ENCODE measurements at regions of chr22 and their contacts with region 1.

Region 1: GRCh38 chr22:36470162-36470993 is 11.1 kb downstream of the TXN2 start:
- DNase-seq: peak; percentile 85 to 87 (median 87)
- H3K4me3 ChIP-seq: no peak overlapping the region
- H3K4me3 Mint-ChIP-seq: no peak overlapping the region
- H3K27ac ChIP-seq: no peak overlapping the region
- H3K27ac Mint-ChIP-seq: peak overlapping the region; percentile 30 to 92 (median 79)
- H3K4me1 ChIP-seq: peaks cover 18% of the 10 kb centered on the region
- H3K4me1 Mint-ChIP-seq: peaks cover 11 to 28% (median 15%) of the 10 kb centered on the region in 4 donors
- H3K27me3 ChIP-seq: no peaks in the 10 kb centered on the region
- H3K27me3 Mint-ChIP-seq: no peaks in the 10 kb centered on the region

Region 2: GRCh38 chr22:36286471-36287224 is 183.7 kb before region 1 on chr22:
- CTCF ChIA-PET with region 1: interaction called, 12 read pairs
- POLR2A ChIA-PET with region 1: no interaction called
- intact Hi-C with region 1: no loop called
- DNase-seq: peak in 4 of 5 donors; percentile 56 to 68 (median 60)
- H3K4me3 ChIP-seq: no peak overlapping the region
- H3K4me3 Mint-ChIP-seq: peak overlapping the region in 6 of 8 donors; percentile 29 to 73 (median 56)
- H3K27ac ChIP-seq: peak overlapping the region; percentile 10
- H3K27ac Mint-ChIP-seq: peak overlapping the region; percentile 83 to 94 (median 89)
- H3K4me1 ChIP-seq: peaks cover 43% of the 10 kb centered on the region
- H3K4me1 Mint-ChIP-seq: peaks cover 20 to 48% (median 34%) of the 10 kb centered on the region in 4 donors
- H3K27me3 ChIP-seq: no peaks in the 10 kb centered on the region
- H3K27me3 Mint-ChIP-seq: no peaks in the 10 kb centered on the region

Region 3: GRCh38 chr22:36339171-36340065 is 131.0 kb before region 1 on chr22:
- CTCF ChIA-PET with region 1: interaction called, 11 read pairs
- POLR2A ChIA-PET with region 1: interaction called, 4 read pairs
- intact Hi-C with region 1: no loop called
- DNase-seq: no peak
- H3K4me3 ChIP-seq: no peak overlapping the region
- H3K4me3 Mint-ChIP-seq: peak overlapping the region in 7 of 8 donors; percentile 44 to 75 (median 54)
- H3K27ac ChIP-seq: peak overlapping the region; percentile 47
- H3K27ac Mint-ChIP-seq: peak overlapping the region; percentile 87 to 99 (median 92)
- H3K4me1 ChIP-seq: peaks cover 100% of the 10 kb centered on the region
- H3K4me1 Mint-ChIP-seq: peaks cover 71 to 96% (median 85%) of the 10 kb centered on the region in 4 donors
- H3K27me3 ChIP-seq: no peaks in the 10 kb centered on the region
- H3K27me3 Mint-ChIP-seq: no peaks in the 10 kb centered on the region

Region 4: DNA sequence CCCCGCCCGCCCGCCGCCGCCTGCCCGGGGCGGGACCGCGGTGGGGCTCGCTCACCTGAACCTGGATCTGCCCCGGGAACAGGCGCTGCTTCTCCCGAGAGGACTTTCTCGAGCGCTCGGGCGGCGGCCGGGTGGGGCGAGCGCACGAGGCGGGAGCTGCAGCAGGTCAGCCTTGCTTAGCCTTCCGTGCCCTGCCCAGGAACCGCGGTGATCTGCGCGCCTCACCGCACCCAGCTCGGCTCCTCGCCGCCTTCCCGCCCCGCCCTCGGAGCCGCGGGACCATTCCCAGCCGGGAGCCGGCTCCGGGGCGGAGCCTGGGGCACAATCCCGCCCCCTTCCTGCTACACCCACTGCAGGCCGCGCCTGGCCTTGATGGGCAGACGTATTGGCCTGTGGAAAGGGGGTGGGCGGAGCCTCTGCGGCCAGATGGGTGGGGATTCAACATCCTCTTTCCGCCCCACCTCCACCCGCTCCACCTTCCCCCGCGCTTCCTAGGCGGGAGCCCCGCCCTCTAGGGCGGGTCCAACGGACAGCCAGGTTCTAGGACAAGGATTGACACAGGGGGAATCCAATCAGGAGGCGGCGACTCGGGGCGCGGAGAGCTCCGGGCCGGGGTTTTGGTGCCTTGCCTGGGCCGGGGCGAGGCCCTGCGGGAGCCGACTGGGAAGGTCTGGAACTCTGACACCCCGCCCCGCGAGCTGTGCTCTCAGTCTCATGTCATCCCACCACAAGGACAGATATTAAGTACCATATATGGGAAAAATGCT is 82.4 kb before region 1 on chr22 and contains the start of gene MYH9:
- CTCF ChIA-PET with region 1: interaction called, 13 read pairs
- POLR2A ChIA-PET with region 1: interaction called, 13 read pairs
- intact Hi-C with region 1: no loop called
- DNase-seq: peak; percentile 99
- H3K4me3 ChIP-seq: peak within 1 kb of the TSS; percentile 88 to 92
- H3K4me3 Mint-ChIP-seq: peak within 1 kb of the TSS; percentile 88 to 98 (median 94)
- H3K27ac ChIP-seq: peak within 1 kb of the TSS; percentile 80
- H3K27ac Mint-ChIP-seq: peak within 1 kb of the TSS; percentile 84 to 99 (median 97)
- H3K4me1 ChIP-seq: peaks cover 28% of the 10 kb centered on the region
- H3K4me1 Mint-ChIP-seq: peaks cover 12 to 45% (median 26%) of the 10 kb centered on the region in 4 donors
- H3K27me3 ChIP-seq: no peaks in the 10 kb centered on the region
- H3K27me3 Mint-ChIP-seq: no peaks in the 10 kb centered on the region
- total RNA-seq, gene MYH9: 717 to 734 TPM

Region 5: DNA sequence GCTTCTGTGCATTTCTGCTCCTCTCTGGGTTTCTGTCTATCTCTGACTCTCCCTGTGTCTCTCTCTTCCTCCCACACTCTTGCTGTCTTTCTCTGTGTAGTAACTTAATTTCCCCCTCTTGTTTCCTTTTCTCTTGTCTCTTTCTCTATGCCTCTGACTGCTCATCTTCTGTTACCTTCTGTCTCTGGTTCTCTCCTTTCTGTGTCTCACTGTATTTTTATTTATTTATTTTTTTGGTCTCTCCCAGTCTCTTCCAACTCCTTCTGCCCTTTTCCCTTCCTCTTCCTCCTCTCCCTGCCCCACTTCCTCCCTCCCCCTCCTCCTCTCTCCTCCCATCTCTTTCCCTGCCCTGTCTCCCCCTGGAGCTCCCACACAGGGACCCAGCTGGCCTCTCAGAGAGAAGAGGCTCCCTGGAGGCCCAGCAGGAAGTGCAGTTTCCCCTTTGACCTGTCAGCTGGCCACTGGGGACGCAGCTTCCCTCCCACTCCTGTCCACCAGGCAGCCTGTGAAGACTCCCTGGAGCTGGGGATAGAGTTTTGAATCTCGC is 44.3 kb before region 1 on chr22:
- CTCF ChIA-PET with region 1: no interaction called
- POLR2A ChIA-PET with region 1: no interaction called
- intact Hi-C with region 1: no loop called
- DNase-seq: no peak
- H3K4me3 ChIP-seq: no peak overlapping the region
- H3K4me3 Mint-ChIP-seq: peak overlapping the region in 3 of 8 donors; percentile 22 to 37 (median 29)
- H3K27ac ChIP-seq: no peak overlapping the region
- H3K27ac Mint-ChIP-seq: peak overlapping the region in 4 of 7 donors; percentile 5 to 84 (median 56)
- H3K4me1 ChIP-seq: peaks cover 17% of the 10 kb centered on the region
- H3K4me1 Mint-ChIP-seq: peaks cover 8 to 22% (median 15%) of the 10 kb centered on the region in 4 donors
- H3K27me3 ChIP-seq: no peaks in the 10 kb centered on the region
- H3K27me3 Mint-ChIP-seq: no peaks in the 10 kb centered on the region

Region 6: GRCh38 chr22:36454916-36455570 is 15.3 kb before region 1 on chr22:
- CTCF ChIA-PET with region 1: interaction called, 12 read pairs
- POLR2A ChIA-PET with region 1: interaction called, 7 read pairs
- intact Hi-C with region 1: loop called (anchors 1 kb)
- DNase-seq: peak; percentile 93 to 95 (median 94)
- H3K4me3 ChIP-seq: peak overlapping the region; percentile 57 to 78
- H3K4me3 Mint-ChIP-seq: peak overlapping the region; percentile 53 to 85 (median 82)
- H3K27ac ChIP-seq: peak overlapping the region; percentile 88
- H3K27ac Mint-ChIP-seq: peak overlapping the region; percentile 92 to 98 (median 93)
- H3K4me1 ChIP-seq: peaks cover 55% of the 10 kb centered on the region
- H3K4me1 Mint-ChIP-seq: peaks cover 29 to 48% (median 44%) of the 10 kb centered on the region in 4 donors
- H3K27me3 ChIP-seq: no peaks in the 10 kb centered on the region
- H3K27me3 Mint-ChIP-seq: no peaks in the 10 kb centered on the region